CD8-positive, alpha-beta T cell (primary cell): ENCODE measurements at regions of chr6 and their contacts with region 1.

Region 1: DNA sequence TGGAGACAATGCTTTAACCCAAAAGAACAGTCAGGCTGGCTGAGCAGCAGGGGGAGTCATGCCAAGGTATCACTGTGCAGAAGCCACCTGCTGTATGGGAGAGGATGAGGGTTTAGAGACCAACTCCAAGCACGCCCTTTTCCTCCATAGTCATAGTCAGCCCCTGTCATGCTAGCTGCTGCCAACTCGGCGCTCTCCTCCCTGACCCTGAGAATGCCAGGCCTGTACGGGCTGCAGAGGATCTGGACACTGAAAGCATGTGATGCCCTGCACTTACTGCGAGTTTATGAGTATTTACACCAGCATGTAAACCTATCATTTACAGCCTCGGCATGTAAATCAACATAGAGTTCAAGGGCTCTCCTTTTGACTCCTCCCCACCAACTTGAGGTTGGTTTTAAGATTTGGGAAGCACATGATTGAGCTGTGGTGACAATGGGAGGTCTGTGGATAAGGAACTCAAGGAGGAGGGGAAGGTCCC is 11.7 kb upstream of the SCUBE3 start:
- DNase-seq: no peak
- ATAC-seq: no peak
- H3K4me3 ChIP-seq: no peak overlapping the region
- H3K4me3 Mint-ChIP-seq: no peak overlapping the region
- H3K27ac ChIP-seq: no peak overlapping the region
- H3K27ac Mint-ChIP-seq: no peak overlapping the region
- H3K4me1 ChIP-seq: no peaks in the 10 kb centered on the region
- H3K4me1 Mint-ChIP-seq: no peaks in the 10 kb centered on the region
- H3K27me3 ChIP-seq: peaks cover 0 to 4% of the 10 kb centered on the region in 2 experiments
- H3K27me3 Mint-ChIP-seq: peaks cover 40% of the 10 kb centered on the region
- CTCF ChIP-seq: no peak

Region 2: DNA sequence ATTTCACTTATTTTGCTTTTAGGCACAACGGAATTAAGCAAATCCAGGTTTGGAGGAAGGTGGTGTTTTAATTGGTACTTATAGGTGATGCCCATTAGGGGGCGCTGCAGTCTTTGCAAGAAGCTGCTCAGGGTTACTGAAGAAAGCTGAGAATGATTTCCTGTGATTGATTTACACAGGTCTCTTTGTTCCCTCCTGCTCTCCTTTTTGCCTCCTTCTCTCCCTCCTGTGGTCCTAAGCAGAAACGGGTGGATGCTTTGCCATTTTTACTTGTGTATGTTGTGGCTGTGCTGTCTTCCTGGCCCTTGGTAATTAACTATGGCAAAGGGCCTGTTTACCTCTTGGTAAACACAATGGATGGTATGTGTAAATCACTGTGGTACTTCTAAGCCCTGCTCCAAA is 215.3 kb before region 1 on chr6:
- CTCF ChIA-PET with region 1: interaction called, 9 read pairs
- POLR2A ChIA-PET with region 1: no interaction called
- intact Hi-C with region 1: loop called (anchors 1 to 2 kb)
- DNase-seq: peak; percentile 16 to 75 (median 61)
- ATAC-seq: peak; percentile 66
- H3K4me3 ChIP-seq: no peak overlapping the region
- H3K4me3 Mint-ChIP-seq: no peak overlapping the region
- H3K27ac ChIP-seq: no peak overlapping the region
- H3K27ac Mint-ChIP-seq: no peak overlapping the region
- H3K4me1 ChIP-seq: no peaks in the 10 kb centered on the region
- H3K4me1 Mint-ChIP-seq: no peaks in the 10 kb centered on the region
- H3K27me3 ChIP-seq: no peaks in the 10 kb centered on the region
- H3K27me3 Mint-ChIP-seq: no peaks in the 10 kb centered on the region
- CTCF ChIP-seq: peak; percentile 71

Region 3: GRCh38 chr6:35146453-35146852 is 55.7 kb before region 1 on chr6:
- CTCF ChIA-PET with region 1: interaction called, 10 read pairs
- POLR2A ChIA-PET with region 1: no interaction called
- intact Hi-C with region 1: loop called in 1 of 2 experiments (anchors 1 kb)
- DNase-seq: peak in 3 of 9 experiments; percentile 15 to 39 (median 37)
- ATAC-seq: no peak
- H3K4me3 ChIP-seq: no peak overlapping the region
- H3K4me3 Mint-ChIP-seq: no peak overlapping the region
- H3K27ac ChIP-seq: no peak overlapping the region
- H3K27ac Mint-ChIP-seq: no peak overlapping the region
- H3K4me1 ChIP-seq: no peaks in the 10 kb centered on the region
- H3K4me1 Mint-ChIP-seq: peaks cover 2% of the 10 kb centered on the region
- H3K27me3 ChIP-seq: peaks cover 1 to 3% of the 10 kb centered on the region in 2 experiments
- H3K27me3 Mint-ChIP-seq: peaks cover 14% of the 10 kb centered on the region
- CTCF ChIP-seq: no peak

Region 4: GRCh38 chr6:35185971-35186370 is 16.1 kb before region 1 on chr6:
- CTCF ChIA-PET with region 1: interaction called, 17 read pairs
- POLR2A ChIA-PET with region 1: no interaction called
- intact Hi-C with region 1: no loop called
- DNase-seq: no peak
- ATAC-seq: no peak
- H3K4me3 ChIP-seq: no peak overlapping the region
- H3K4me3 Mint-ChIP-seq: no peak overlapping the region
- H3K27ac ChIP-seq: no peak overlapping the region
- H3K27ac Mint-ChIP-seq: no peak overlapping the region
- H3K4me1 ChIP-seq: no peaks in the 10 kb centered on the region
- H3K4me1 Mint-ChIP-seq: no peaks in the 10 kb centered on the region
- H3K27me3 ChIP-seq: no peaks in the 10 kb centered on the region
- H3K27me3 Mint-ChIP-seq: peaks cover 28% of the 10 kb centered on the region
- CTCF ChIP-seq: no peak

Region 5: DNA sequence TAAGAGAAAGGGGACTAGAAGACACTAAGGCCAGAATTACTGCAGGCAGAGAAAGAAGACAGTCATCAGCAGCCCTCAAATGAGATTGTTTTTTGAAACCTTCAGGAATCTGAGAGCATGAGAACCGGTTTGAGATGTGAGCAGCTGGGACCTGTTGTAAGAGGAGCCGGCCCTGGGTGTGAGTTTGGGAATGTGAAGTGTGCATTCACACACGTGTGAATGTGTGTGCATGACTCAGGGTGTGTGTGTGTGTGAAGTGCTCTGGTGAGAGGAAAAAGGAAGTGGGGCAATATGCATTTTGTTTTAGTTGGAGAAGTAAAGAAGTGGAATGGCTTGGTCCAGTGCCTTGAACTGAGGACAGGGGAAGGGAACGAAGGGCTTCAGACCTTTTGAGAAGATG is 15.9 kb after region 1 on chr6:
- CTCF ChIA-PET with region 1: interaction called, 22 read pairs
- POLR2A ChIA-PET with region 1: no interaction called
- intact Hi-C with region 1: no loop called
- DNase-seq: no peak
- ATAC-seq: no peak
- H3K4me3 ChIP-seq: no peak overlapping the region
- H3K4me3 Mint-ChIP-seq: no peak overlapping the region
- H3K27ac ChIP-seq: no peak overlapping the region
- H3K27ac Mint-ChIP-seq: no peak overlapping the region
- H3K4me1 ChIP-seq: peaks cover 4% of the 10 kb centered on the region
- H3K4me1 Mint-ChIP-seq: peaks cover 7% of the 10 kb centered on the region
- H3K27me3 ChIP-seq: peaks cover 9 to 18% of the 10 kb centered on the region in 2 experiments
- H3K27me3 Mint-ChIP-seq: peaks cover 42% of the 10 kb centered on the region
- CTCF ChIP-seq: no peak